ENCODE measurements at regions of chr2 and their contacts with region 1.

Region 1: GRCh38 chr2:190169221-190170072 is 106.9 kb upstream of the MSTN start:
- DNase-seq: no peak
- H3K4me3 ChIP-seq: no peak overlapping the region
- CTCF ChIP-seq: no peak
- POLR2A ChIP-seq: no peak

Region 2: DNA sequence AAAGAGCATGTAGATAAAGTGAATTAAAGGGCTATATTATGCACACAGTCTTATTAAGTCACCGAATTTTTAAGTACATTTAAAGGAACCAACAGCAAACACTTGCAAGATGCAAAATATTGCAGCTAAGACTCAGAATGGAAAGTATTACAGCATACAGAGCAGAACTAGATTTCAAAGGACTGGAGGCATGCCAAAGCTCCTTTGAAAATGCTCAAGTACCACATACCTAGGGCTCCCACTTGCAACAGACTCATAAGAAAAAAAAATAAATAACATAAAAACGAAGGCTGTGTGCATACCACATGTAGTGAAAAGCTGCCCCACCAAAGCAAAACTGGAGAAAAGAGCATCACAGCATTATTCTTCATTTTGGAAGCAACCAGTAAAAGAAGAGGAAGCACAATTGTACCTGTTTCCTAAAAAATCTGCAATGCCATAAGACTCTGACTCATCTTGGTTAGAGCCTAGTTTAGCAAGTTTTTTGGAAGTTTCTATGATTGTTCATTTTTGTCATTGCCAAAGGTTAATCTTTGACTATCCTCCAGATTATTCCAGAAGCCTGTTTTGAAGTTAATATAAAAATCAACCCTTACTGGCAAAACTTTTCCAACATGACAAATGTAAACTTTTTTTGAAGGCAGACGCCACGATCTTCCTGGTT is 1501.3 kb before region 1 on chr2:
- intact Hi-C with region 1: no loop called
- DNase-seq: no peak
- H3K4me3 ChIP-seq: no peak overlapping the region
- CTCF ChIP-seq: no peak
- POLR2A ChIP-seq: no peak

Region 3: GRCh38 chr2:188845692-188846091 is 1323.8 kb before region 1 on chr2:
- intact Hi-C with region 1: loop called (anchors 10 kb)
- DNase-seq: no peak
- H3K4me3 ChIP-seq: no peak overlapping the region
- CTCF ChIP-seq: no peak
- POLR2A ChIP-seq: no peak

Measured in lower leg skin (tissue), 4 donors.